PC-9 (cell line): ENCODE measurements at regions of chr10 and their contacts with region 1.

Region 1: DNA sequence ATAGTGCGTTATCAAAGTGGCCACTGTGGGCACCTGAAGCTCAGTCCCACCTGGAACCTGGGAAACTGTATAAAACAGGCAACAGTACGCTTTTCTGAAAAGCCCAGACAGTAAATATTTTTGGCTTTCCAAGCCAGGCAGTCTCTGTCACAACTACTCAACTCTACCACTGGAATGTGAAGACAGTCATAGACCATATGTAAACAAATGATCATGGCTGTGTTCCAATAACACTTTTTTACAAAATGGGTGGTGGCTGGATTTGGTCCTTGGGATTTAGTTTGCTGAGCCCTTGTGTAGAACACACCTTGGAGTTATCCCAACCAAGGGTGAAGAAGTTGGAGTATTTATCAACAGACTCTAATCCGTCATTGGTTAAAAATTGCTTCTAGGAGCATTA is 259.9 kb downstream of the SKIDA1 start:
- DNase-seq: peak; percentile 31 to 85
- H3K4me3 ChIP-seq: no peak overlapping the region
- H3K27ac ChIP-seq: peak overlapping the region; percentile 61
- H3K4me1 ChIP-seq: peaks cover 24% of the 10 kb centered on the region
- H3K27me3 ChIP-seq: no peaks in the 10 kb centered on the region
- CTCF ChIP-seq: no peak

Region 2: GRCh38 chr10:20990604-20991003 is 275.0 kb before region 1 on chr10:
- CTCF ChIA-PET with region 1: no interaction called
- POLR2A ChIA-PET with region 1: no interaction called
- intact Hi-C with region 1: loop called (anchors 5 kb)
- DNase-seq: peak in 1 of 2 experiments; percentile 72
- H3K4me3 ChIP-seq: no peak overlapping the region
- H3K27ac ChIP-seq: no peak overlapping the region
- H3K4me1 ChIP-seq: peaks cover 35% of the 10 kb centered on the region
- H3K27me3 ChIP-seq: no peaks in the 10 kb centered on the region
- CTCF ChIP-seq: no peak

Region 3: DNA sequence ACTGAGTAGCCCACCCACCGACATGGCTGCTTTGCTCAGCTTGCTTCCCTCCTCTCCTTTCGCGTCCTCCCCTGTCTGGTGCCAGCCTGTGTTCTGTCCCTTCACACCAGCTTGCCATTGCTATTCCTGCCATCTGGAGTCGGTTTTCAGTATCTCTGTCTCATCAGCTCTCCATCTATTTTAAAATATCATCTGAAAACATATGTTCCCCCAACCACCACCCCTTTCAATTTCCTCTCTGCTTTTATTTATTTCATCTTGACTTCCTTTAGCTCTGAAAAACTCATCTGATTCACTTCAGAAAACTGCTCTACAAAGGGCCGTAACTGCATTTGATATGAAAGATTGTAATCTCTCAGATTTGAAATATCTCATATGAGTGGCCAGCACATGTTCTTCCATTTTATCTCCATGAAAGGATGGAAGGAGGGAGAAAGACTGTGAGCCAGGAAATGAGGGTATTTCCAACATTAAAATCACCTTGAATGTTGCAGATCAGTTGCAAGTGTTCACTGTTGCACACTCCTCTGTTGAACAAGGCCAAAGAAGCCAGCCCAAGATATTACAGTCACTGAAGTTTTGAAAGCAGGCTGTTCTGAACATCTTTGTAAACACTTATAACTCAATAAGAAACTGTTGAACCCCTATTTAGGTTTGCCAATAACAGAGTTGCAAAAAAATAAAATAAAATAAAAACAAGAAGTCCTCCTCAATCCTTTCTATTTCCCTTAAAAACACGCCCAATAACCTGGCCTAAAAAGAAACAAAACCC is 166.1 kb before region 1 on chr10:
- CTCF ChIA-PET with region 1: no interaction called
- POLR2A ChIA-PET with region 1: no interaction called
- intact Hi-C with region 1: loop called (anchors 1 kb)
- DNase-seq: no peak
- H3K4me3 ChIP-seq: no peak overlapping the region
- H3K27ac ChIP-seq: peak overlapping the region; percentile 19; the same call in 1 of the 2 replicates
- H3K4me1 ChIP-seq: peaks cover 38% of the 10 kb centered on the region
- H3K27me3 ChIP-seq: no peaks in the 10 kb centered on the region
- CTCF ChIP-seq: no peak

Region 4: GRCh38 chr10:21238717-21239116 is 26.9 kb before region 1 on chr10:
- CTCF ChIA-PET with region 1: no interaction called
- POLR2A ChIA-PET with region 1: interaction called, 9 read pairs
- intact Hi-C with region 1: loop called (anchors 2 kb)
- DNase-seq: no peak
- H3K4me3 ChIP-seq: no peak overlapping the region
- H3K27ac ChIP-seq: peak overlapping the region; percentile 78
- H3K4me1 ChIP-seq: peaks cover 25% of the 10 kb centered on the region
- H3K27me3 ChIP-seq: no peaks in the 10 kb centered on the region
- CTCF ChIP-seq: no peak

Region 5: GRCh38 chr10:21495752-21496342 is 230.2 kb after region 1 on chr10:
- CTCF ChIA-PET with region 1: no interaction called
- POLR2A ChIA-PET with region 1: no interaction called
- intact Hi-C with region 1: no loop called
- DNase-seq: peak; percentile 56 to 94
- H3K4me3 ChIP-seq: peak overlapping the region; percentile 81
- H3K27ac ChIP-seq: peak overlapping the region; percentile 48
- H3K4me1 ChIP-seq: peaks cover 6% of the 10 kb centered on the region
- H3K27me3 ChIP-seq: no peaks in the 10 kb centered on the region
- CTCF ChIP-seq: peak; percentile 78